Activated CD4-positive, alpha-beta T cell treated with anti-CD3 and anti-CD28 coated beads, Interleukin-2, amount 10 ng/mL, durations not matched to agents 24 days and 14 days (primary cell): ENCODE measurements at regions of chr16 and their contacts with region 1.

Region 1: DNA sequence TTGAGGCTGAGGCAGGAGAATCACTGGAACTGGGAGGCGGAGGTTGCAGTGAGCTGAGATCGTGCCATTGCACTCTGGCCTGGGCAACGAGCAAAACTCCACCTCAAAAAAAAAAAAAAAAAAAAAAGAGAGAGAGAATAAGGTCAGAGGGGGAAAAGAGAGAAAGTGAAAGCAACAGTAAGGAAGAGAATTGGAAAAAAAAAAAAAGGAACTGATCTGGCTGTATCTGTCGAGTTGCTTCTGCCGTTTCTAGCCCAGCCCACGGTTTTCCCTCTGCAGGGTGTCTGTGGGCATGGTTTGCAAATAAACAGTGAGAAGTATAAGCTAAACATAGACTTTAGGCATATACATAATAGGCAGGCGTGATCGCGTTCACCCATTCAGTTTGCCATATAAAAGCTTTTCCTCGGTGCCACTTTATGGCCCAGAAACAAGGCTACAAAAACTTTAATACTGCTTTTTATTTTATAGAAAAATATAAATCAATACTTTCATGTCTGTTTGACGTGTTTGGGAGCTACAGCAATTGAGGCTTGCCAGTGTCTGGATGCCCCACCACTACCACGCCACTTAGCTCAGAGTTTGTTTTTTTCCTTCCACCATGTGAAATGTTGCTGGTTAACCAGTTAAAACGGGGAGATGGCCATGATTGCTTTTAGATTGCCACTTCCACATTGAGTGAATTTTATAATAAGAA is 436.7 kb downstream of the MAF start:
- DNase-seq: peak; percentile 70
- H3K4me3 Mint-ChIP-seq: peak overlapping the region; percentile 57
- H3K27ac Mint-ChIP-seq: peak overlapping the region; percentile 14
- H3K4me1 Mint-ChIP-seq: peaks cover 14% of the 10 kb centered on the region
- H3K27me3 Mint-ChIP-seq: no peaks in the 10 kb centered on the region

Region 2: DNA sequence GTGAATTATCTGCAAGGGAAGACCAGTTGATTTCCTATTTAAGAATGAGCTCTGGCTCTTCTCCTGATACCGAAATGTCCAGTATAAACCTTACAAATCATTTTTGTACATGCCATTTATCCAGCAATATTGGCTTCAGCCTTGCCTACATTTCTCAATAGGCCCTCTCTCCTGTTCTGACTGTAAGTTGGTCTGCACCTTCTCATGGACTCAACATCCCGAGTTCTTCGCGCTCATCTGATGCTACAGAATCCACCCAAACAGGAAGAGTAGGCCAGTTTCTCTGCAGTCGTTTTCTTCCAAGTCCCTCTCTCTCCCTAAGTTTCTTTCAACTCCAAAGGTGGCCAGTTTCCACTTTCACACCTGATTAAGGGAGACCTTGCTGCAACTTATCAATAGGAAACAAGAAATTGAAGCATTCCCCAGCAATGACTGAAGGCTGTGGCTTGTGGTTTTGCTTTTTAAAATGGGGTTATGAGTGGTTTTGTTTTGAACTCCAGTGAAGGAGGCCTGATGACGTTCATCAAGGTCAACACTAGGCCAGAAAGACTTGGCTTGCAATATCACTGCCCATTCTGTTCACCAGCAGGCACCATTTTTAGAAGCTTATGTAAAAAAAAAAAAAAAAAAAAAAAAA is 53.7 kb after region 1 on chr16:
- intact Hi-C with region 1: loop called (anchors 5 kb)
- DNase-seq: peak; percentile 80
- H3K4me3 Mint-ChIP-seq: peak overlapping the region; percentile 4
- H3K27ac Mint-ChIP-seq: peak overlapping the region; percentile 50
- H3K4me1 Mint-ChIP-seq: peaks cover 22% of the 10 kb centered on the region
- H3K27me3 Mint-ChIP-seq: peaks cover 7% of the 10 kb centered on the region